Right cardiac atrium (tissue), 5 donors: ENCODE measurements at regions of chr1 and their contacts with region 1.

Region 1: GRCh38 chr1:58816072-58816746 is 32.4 kb upstream of the JUN start:
- DNase-seq: peak; percentile 93 to 97 (median 97)
- ATAC-seq: peak; percentile 90 to 94
- H3K4me3 ChIP-seq: peak overlapping the region; percentile 77
- H3K27ac ChIP-seq: peak overlapping the region; percentile 97
- H3K4me1 ChIP-seq: peaks cover 4% of the 10 kb centered on the region
- H3K27me3 ChIP-seq: no peaks in the 10 kb centered on the region

Region 2: GRCh38 chr1:58883037-58883887 is 67.1 kb after region 1 on chr1:
- intact Hi-C with region 1: loop called in 2 of 4 experiments (anchors 10 kb)
- DNase-seq: peak; percentile 82 to 90 (median 87)
- ATAC-seq: peak; percentile 69 to 85
- H3K4me3 ChIP-seq: no peak overlapping the region
- H3K27ac ChIP-seq: peak overlapping the region; percentile 71
- H3K4me1 ChIP-seq: peaks cover 30% of the 10 kb centered on the region
- H3K27me3 ChIP-seq: no peaks in the 10 kb centered on the region

Region 3: GRCh38 chr1:58896246-58897183 is 80.3 kb after region 1 on chr1:
- intact Hi-C with region 1: loop called in 1 of 4 experiments (anchors 5 kb)
- DNase-seq: peak; percentile 73 to 88 (median 82)
- ATAC-seq: peak; percentile 74 to 84
- H3K4me3 ChIP-seq: no peak overlapping the region
- H3K27ac ChIP-seq: peak overlapping the region; percentile 71
- H3K4me1 ChIP-seq: peaks cover 34% of the 10 kb centered on the region
- H3K27me3 ChIP-seq: no peaks in the 10 kb centered on the region

Region 4: GRCh38 chr1:58908561-58909560 is 92.7 kb after region 1 on chr1:
- intact Hi-C with region 1: loop called in 1 of 4 experiments (anchors 5 kb)
- DNase-seq: no peak
- ATAC-seq: peak in 1 of 2 donors; percentile 46
- H3K4me3 ChIP-seq: no peak overlapping the region
- H3K27ac ChIP-seq: no peak overlapping the region
- H3K4me1 ChIP-seq: no peaks in the 10 kb centered on the region
- H3K27me3 ChIP-seq: no peaks in the 10 kb centered on the region

Region 5: DNA sequence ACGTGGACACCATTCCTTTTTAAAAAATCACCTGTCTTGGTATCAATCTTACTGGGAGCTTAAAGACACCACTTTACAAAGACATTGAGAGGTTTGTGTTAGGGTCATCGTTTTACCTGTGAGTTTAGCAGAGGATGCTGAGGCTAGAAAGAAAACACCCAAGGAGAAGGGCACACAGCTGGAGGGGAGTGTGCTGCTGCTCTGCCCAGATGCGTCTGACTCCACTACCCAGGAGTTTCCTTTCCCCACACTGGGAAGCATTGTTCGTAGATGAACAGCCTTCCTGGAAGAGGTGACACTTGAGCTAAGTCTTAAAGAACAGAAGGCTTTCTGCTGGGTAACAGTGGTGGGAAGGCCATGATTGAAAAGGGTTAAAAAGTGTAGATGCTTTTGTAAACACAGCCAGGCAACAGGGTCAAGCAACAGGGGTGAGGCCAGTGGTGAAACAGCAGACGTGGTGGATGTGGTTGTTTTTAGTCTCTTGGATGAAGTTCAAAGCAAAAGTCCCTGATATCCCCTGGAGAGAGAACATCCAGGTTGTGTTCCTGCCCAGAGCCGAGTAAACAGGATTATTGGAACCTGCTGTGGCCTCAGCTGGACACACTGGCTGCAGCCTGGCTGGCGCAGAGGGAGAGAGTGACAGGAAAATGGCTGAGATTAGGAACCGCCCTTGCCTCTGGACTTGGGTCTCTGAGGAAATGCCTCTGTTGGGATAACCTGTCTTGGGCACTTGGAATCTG is 166.2 kb after region 1 on chr1:
- intact Hi-C with region 1: loop called in 1 of 4 experiments (anchors 10 kb)
- DNase-seq: peak in 2 of 3 donors; percentile 36 to 79
- ATAC-seq: peak; percentile 84 to 88
- H3K4me3 ChIP-seq: no peak overlapping the region
- H3K27ac ChIP-seq: peak overlapping the region; percentile 39
- H3K4me1 ChIP-seq: peaks cover 10% of the 10 kb centered on the region
- H3K27me3 ChIP-seq: no peaks in the 10 kb centered on the region